Activated CD4-positive, alpha-beta T cell treated with anti-CD3 and anti-CD28 coated beads for 36 hours (primary cell): ENCODE measurements at regions of chr3 and their contacts with region 1.

Region 1: DNA sequence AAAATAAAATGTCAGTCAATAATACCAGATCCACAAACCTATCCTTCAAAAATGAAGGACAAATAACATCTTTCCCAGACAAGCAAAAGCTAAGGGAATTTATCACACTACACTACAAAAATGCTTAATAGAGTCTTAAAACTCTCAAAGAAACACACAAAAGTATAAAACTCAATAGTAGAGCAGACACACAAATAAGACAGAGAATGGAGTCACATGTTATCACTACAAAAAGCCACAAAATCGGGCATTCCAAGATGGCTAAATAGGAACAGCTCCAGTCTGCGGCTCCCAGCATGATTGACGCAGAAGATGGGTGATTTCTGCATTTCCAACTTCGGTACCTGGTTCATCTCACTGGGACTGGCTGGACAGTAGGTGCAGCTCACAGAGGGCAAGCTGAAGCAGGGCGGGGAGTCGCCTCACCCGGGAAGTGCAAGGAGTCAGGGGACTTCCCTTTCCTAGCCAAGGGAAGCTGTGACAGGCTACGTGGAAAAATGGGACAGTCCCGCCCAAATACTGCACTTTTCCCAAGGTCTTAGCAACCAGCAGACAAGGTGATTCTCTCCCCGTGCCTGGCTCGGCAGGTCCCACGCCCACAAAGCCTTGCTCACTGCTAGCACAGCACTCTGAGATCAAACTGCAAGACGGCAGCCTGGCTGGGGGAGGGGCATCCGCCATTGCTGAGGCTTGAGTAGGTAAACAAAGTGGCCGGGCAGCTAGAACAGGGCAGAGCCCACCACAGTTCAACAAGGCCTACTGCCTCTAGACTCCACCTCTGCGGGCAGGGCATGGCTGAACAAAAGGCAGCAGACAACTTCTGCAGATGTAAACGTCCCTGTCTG is 46.3 kb downstream of the SENP7 start:
- DNase-seq: peak; percentile 82
- ATAC-seq: peak; percentile 70
- H3K4me3 Mint-ChIP-seq: peak overlapping the region; percentile 54
- H3K27ac Mint-ChIP-seq: peak overlapping the region; percentile 86
- H3K4me1 Mint-ChIP-seq: peaks cover 62% of the 10 kb centered on the region
- H3K27me3 Mint-ChIP-seq: no peaks in the 10 kb centered on the region

Region 2: GRCh38 chr3:101414121-101414520 is 52.6 kb before region 1 on chr3:
- CTCF ChIA-PET with region 1: no interaction called
- POLR2A ChIA-PET with region 1: no interaction called
- intact Hi-C with region 1: loop called in 1 of 2 experiments (anchors 5 kb)
- DNase-seq: no peak
- ATAC-seq: no peak
- H3K4me3 Mint-ChIP-seq: no peak overlapping the region
- H3K27ac Mint-ChIP-seq: peak overlapping the region; percentile 23
- H3K4me1 Mint-ChIP-seq: peaks cover 33% of the 10 kb centered on the region
- H3K27me3 Mint-ChIP-seq: no peaks in the 10 kb centered on the region